Right ventricle myocardium superior (tissue), 1 donor: ENCODE measurements at regions of chr9 and their contacts with region 1.

Region 1: GRCh38 chr9:4297151-4297785 is 2.6 kb downstream of the GLIS3 start:
- DNase-seq: peak; percentile 70
- ATAC-seq: peak; percentile 51

Region 2: GRCh38 chr9:4164356-4164755 is 132.9 kb before region 1 on chr9:
- intact Hi-C with region 1: loop called (anchors 5 kb)
- DNase-seq: no peak
- ATAC-seq: no peak